ENCODE measurements at regions of chr9 and their contacts with region 1.

Region 1: DNA sequence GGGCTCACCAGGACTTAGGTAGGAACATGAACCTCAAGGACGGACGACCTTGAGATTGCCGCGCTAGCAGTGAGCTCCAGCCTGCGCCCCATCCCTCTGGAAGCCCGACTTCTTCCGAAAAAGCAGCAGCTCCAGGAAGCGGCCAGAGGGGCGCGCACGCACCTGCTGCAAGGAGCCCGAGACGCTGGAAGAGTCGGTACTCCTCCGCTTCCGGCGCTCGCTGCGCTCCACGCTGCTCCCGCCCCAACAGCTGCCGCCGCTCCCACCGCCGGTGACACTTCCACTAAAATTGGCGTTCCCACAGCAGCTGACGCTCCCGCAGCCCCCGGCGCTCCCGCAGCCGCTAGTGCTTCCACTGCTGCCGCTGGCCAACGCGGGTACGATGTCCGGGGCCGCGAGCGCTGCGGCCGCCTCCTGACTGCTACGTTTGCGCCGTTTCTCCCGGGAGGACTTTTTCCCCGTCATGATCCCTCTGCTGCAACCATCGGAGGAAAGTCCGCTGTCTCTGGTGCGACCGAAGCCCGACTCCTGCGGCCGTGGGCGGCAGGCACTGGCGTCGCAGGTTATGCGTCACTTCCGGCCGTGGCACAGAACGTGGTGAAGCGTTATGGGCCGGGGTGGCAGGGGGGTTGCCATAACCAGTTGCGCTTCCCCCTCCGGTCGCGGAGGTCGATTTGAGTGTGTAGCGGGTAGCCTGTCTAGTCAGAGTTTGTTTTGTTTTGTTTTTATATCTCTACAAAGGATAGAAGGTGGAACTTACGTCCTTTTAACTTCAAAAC is at the start of gene CAAP1:
- DNase-seq: peak; percentile 90
- ATAC-seq: peak; percentile 96
- H3K4me3 Mint-ChIP-seq: peak within 1 kb of the TSS; percentile 100
- H3K27ac Mint-ChIP-seq: peak within 1 kb of the TSS; percentile 100
- H3K4me1 Mint-ChIP-seq: peaks cover 26% of the 10 kb centered on the region
- H3K27me3 Mint-ChIP-seq: no peaks in the 10 kb centered on the region
- total RNA-seq, gene CAAP1: 17.7 to 18.6 TPM

Region 2: GRCh38 chr9:26802921-26803320 is 89.5 kb before region 1 on chr9:
- POLR2A ChIA-PET with region 1: no interaction called
- DNase-seq: no peak
- ATAC-seq: no peak
- H3K4me3 Mint-ChIP-seq: no peak overlapping the region
- H3K27ac Mint-ChIP-seq: no peak overlapping the region
- H3K4me1 Mint-ChIP-seq: no peaks in the 10 kb centered on the region
- H3K27me3 Mint-ChIP-seq: no peaks in the 10 kb centered on the region

Region 3: DNA sequence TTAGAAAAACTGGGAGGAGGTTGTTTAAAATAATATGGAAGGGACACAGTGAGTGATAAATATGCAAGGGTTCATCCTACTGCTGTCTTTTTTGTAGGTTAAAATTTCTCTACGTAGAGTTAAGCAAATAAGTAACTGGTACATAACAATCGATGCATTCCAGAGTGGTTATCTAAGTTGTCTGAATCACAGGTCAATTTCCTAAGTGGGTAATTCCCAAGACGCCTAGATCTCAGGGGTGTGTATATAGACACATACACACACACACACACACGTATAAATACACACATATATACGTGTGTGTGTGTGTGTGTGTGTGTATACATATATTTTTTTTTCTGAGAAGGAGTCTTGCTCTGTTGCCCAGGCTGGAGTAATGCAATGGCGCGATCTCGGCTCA is 22.1 kb before region 1 on chr9:
- POLR2A ChIA-PET with region 1: no interaction called
- DNase-seq: no peak
- ATAC-seq: no peak
- H3K4me3 Mint-ChIP-seq: no peak overlapping the region
- H3K27ac Mint-ChIP-seq: no peak overlapping the region
- H3K4me1 Mint-ChIP-seq: no peaks in the 10 kb centered on the region
- H3K27me3 Mint-ChIP-seq: no peaks in the 10 kb centered on the region

Region 4: GRCh38 chr9:26946753-26947727 is 54.6 kb after region 1 on chr9 and contains the start of gene PLAA:
- POLR2A ChIA-PET with region 1: interaction called, 23 read pairs
- DNase-seq: peak; percentile 88
- ATAC-seq: peak; percentile 98
- H3K4me3 Mint-ChIP-seq: peak within 1 kb of the TSS; percentile 95
- H3K27ac Mint-ChIP-seq: peak within 1 kb of the TSS; percentile 97
- H3K4me1 Mint-ChIP-seq: peaks cover 34% of the 10 kb centered on the region
- H3K27me3 Mint-ChIP-seq: no peaks in the 10 kb centered on the region
- total RNA-seq, gene PLAA: 28.3 to 29.8 TPM

Region 5: DNA sequence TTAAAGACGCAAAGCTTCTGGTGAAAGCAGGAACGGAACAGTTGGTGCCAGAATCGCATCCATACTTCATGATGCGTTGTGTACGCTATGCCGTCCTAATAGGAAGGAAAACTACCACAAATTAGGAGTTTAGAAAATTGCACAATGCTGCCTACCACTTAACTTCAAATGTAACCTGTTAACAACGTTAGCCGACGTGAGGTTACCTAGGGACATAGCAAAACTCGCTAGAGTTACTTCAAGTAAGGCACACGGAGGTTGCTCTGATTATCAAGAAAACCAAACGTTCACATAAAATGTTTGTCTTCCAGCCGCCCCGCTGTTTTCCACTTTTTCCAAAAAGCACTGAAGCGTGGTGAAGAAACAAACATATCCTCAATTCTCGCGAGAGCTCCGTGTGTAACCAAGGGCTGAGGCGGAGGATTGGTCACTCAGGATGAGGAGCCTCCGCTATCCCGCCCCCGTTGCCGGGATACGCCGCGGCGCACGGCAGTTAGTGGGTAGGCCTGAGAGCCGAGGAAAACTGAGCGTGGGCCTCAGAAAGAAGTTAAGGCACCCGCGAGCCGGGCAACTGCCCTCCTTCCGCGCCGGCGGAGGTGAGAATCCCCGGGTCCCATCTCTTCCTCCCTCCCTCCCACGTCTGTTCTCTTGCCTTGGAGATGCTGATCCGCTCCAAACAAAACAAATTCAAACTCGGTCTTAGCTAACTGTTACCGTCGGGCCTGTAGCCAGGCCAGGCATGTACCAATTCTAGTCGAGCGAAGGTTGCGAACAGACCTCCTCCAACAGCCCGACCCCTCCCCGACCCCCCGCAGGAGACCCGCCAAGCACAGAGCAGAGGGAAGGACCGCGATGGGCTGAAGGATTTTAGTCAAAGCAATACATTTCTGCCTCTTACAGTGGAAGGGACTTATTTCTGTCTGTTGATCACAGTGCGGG is 63.8 kb after region 1 on chr9 and contains the start of gene IFT74:
- POLR2A ChIA-PET with region 1: interaction called, 15 read pairs
- DNase-seq: peak; percentile 89
- ATAC-seq: peak; percentile 100
- H3K4me3 Mint-ChIP-seq: peak within 1 kb of the TSS; percentile 86
- H3K27ac Mint-ChIP-seq: peak within 1 kb of the TSS; percentile 92
- H3K4me1 Mint-ChIP-seq: peaks cover 26% of the 10 kb centered on the region
- H3K27me3 Mint-ChIP-seq: no peaks in the 10 kb centered on the region
- total RNA-seq, gene IFT74: 9.2 to 10.1 TPM